Right ventricle myocardium inferior (tissue), 1 donor: ENCODE measurements at regions of chr11 and their contacts with region 1.

Region 1: DNA sequence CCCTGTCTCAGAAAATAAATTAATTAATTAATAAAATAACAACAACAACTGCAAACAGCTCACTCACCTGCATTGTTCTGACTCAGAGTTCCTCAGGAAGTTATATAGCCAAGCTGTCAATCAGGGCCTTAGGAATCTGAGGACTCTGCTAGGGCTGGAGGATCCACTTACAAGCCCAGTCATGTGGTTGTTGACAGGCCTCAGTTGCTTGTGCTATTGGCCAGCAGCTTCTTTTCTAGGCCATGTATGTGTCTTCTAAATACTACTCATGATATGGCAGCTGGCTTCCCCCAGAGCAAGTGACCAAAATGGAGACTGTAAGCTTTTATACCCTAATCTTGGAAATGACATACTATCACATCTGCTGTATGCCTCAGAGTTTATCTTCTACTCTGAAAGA is 20.8 kb upstream of the ATP5MG start:
- DNase-seq: no peak
- ATAC-seq: no peak

Region 2: DNA sequence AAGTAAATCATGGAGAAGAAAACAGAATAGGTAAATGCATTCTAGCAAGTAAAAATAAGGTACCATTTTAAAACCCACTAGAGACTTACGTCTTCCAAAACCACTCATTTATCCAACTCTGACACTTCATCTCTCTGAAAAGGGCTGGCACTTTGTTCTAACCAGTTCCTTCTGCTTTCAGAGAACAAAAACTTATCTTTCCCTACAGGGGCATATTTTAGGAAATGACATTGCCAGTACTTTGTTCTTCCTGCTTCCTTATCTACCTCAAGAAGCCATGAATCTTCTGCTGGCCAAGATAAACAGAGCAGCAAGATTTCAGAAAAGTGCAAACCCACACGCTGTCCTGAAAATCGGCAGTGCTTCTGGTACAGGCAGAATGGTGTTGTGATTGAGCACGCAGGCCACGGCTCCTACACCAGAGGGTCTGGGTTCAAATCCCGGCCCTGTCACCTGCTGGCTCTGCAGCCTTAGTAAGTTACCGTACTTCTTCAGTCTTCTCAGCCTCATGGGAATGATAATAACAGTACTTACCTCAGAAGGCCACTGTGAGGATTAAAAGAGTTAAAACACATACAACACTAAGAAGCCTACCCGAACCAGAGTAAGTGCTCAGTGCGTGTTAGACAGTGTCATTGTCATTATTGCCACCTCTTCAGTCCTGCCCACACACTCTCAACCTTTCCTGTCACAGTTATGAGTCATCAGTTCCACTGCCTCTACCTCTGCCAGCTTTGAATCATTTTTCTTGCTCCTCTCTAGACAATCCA is 139.4 kb before region 1 on chr11:
- intact Hi-C with region 1: no loop called
- DNase-seq: no peak
- ATAC-seq: peak; percentile 70

Region 3: GRCh38 chr11:118435893-118436624 is 55.5 kb after region 1 on chr11 and contains the start of gene KMT2A:
- intact Hi-C with region 1: no loop called
- DNase-seq: peak; percentile 98
- ATAC-seq: peak; percentile 95
- total RNA-seq, gene KMT2A: 24.3 TPM

Region 4: GRCh38 chr11:118752654-118753053 is 372.1 kb after region 1 on chr11:
- intact Hi-C with region 1: loop called (anchors 5 kb)
- DNase-seq: no peak
- ATAC-seq: no peak